ENCODE measurements at regions of chr12 and their contacts with region 1.

Region 1: DNA sequence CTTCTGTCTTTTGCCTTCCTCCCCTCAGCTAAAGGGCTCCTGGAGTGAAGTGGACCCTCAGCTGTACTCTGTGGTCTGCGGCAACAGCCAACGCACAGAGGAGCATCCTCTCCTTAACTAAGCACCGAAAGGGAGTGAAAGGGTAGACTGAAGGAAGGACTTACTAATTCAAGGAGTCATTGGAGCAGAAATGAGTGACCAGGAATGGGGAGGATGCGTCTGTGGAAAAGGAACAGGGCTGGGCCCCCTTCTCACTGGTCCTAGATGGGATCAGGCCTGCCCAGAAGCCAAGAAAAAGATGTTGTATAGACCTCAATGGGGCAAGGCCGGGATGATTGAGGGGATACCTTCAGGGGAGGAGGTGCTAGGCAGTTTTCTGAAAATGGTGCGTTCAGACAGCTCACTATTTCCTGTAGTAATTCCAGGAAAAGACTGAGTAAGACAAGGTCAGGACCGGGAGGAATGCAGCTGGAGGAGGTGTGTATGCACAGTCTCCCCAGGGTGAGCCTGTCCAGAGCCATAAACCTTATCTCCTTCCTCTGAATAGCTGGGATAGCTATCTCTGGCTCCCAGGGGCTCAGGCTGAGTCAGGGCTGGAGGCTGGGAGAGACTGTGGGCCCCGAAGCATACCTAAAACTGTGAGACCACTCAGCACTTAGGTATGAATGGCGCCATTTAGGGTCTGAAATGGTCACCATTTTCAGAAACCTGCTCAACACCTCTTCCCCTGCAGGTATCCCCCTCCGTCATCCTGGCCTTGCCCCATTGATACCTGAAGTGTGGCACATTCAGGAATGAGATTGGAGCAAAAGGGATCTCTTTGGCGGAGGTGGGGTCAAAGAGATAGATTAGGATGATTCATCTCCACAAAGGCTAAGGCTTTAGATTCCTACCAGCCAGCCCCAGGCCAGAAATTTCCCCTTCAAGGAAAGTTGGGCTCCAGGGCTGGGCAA is 20.2 kb upstream of the KRT8 start:
- DNase-seq: peak; percentile 56
- H3K4me3 Mint-ChIP-seq: peak overlapping the region; percentile 36
- H3K27ac Mint-ChIP-seq: peak overlapping the region; percentile 96
- H3K4me1 Mint-ChIP-seq: peaks cover 56% of the 10 kb centered on the region
- H3K27me3 Mint-ChIP-seq: no peaks in the 10 kb centered on the region
- CTCF ChIP-seq: no peak

Region 2: GRCh38 chr12:52884526-52885293 is 40.3 kb before region 1 on chr12:
- CTCF ChIA-PET with region 1: interaction called, 16 read pairs
- intact Hi-C with region 1: no loop called
- DNase-seq: peak; percentile 85
- H3K4me3 Mint-ChIP-seq: peak overlapping the region; percentile 19
- H3K27ac Mint-ChIP-seq: peak overlapping the region; percentile 95
- H3K4me1 Mint-ChIP-seq: no peaks in the 10 kb centered on the region
- H3K27me3 Mint-ChIP-seq: no peaks in the 10 kb centered on the region
- CTCF ChIP-seq: peak; percentile 92

Region 3: DNA sequence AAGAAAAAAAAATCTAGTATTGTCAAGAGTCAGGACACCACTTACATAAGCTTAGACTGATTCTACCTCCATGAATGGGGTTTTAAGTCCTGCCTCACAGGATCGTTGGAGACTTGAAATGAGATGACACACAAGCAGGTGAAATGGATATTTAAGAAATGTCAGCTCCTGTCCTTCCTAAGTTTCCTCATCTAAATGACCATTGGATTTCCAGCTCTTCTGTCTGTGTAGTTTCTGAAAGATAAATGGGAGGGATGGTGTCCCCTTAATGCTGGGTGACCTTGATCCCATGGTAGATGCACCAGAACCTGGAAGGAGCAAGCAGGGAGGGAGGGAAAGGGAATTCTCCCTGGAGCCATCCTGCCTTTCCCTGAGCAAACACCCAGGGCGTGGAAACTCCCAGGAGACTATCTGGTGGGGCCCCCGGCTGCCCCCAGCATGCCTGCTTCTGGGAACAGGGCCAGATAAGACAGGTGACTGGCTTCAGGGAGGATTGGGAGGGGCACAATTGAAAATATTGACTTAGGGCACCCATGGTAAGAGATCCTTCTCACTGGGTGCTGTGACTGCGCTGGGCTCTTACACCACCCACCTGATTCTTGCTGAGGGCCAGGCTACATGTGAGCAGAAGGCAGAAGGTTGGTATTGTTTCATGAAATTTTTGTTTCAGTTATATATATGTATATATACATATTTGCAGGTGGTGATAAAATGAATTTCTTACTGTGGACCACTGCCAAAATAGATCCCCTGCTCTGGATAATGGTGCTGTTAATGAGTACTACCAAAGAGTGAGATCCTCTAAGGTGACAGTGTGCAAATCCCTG is 29.8 kb before region 1 on chr12:
- CTCF ChIA-PET with region 1: interaction called, 16 read pairs
- intact Hi-C with region 1: no loop called
- DNase-seq: peak; percentile 71
- H3K4me3 Mint-ChIP-seq: peak overlapping the region; percentile 58
- H3K27ac Mint-ChIP-seq: peak overlapping the region; percentile 90
- H3K4me1 Mint-ChIP-seq: peaks cover 31% of the 10 kb centered on the region
- H3K27me3 Mint-ChIP-seq: no peaks in the 10 kb centered on the region
- CTCF ChIP-seq: no peak

Region 4: DNA sequence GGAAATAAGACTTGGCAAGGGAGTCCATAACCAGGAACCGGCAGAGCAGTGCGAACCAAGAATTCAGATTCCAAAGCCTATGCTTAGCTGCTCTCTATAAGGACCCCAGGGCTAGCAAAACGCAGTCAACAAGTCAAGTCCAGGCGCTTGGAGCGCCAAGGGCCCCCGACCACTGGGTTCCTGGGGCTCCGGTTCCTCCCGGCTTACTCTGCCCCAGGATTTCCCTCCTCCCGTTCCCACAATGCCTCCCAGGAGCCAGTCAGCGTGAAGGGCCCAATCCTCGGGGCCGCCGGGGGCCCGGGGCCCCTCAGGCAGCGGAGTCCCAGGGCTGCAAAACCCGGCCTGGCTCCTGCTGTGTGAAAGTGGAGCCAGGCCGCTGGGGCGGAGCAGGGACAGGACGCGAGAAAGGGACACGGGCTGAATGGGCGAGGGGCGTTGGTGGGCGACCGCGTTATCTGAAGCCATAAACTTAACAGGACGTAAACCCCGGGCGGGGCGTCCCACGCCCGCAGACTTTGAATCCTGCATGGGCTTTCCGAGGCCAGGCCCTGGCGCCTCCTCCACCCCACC is 21.7 kb before region 1 on chr12:
- CTCF ChIA-PET with region 1: interaction called, 109 read pairs
- intact Hi-C with region 1: loop called (anchors 1 kb)
- DNase-seq: no peak
- H3K4me3 Mint-ChIP-seq: peak overlapping the region; percentile 76
- H3K27ac Mint-ChIP-seq: peak overlapping the region; percentile 97
- H3K4me1 Mint-ChIP-seq: peaks cover 43% of the 10 kb centered on the region
- H3K27me3 Mint-ChIP-seq: no peaks in the 10 kb centered on the region
- CTCF ChIP-seq: no peak

Region 5: DNA sequence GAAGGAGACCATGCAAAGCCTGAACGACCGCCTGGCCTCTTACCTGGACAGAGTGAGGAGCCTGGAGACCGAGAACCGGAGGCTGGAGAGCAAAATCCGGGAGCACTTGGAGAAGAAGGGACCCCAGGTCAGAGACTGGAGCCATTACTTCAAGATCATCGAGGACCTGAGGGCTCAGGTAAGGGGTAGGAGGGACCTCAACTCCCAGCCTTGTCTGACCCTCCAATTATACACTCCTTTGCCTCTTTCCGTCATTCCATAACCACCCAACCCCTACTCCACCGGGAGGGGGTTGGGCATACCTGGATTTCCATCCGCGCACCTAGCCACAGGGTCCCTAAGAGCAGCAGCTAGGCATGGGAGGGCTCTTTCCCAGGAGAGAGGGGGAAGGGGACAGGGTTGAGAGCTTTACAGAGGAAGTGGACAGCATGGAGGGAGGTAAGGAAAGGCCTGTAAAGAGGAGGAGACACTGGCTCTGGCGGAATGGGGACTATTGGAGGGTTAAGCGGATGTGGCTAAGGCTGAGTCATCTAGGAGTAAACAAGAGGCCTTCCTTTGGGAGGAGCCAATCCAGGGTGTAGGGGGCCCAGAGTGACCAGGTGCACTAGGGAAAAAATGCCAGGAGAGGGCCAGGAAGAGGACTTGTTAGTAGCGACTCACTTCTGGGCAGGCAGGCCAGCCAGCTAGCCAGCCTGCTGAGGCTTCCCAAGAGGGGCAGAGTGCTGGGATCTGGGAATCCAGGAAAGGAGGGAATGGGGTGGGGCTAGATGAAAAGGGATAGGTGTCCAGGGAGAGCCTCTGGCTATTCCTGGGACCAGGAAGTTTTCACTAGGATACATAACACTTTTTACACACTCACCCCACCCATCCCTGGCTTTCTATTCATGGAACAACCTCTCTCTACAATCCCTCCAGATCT is 24.6 kb after region 1 on chr12:
- CTCF ChIA-PET with region 1: interaction called, 33 read pairs
- intact Hi-C with region 1: loop called (anchors 1 kb)
- DNase-seq: peak; percentile 83
- H3K4me3 Mint-ChIP-seq: peak overlapping the region; percentile 87
- H3K27ac Mint-ChIP-seq: peak overlapping the region; percentile 97
- H3K4me1 Mint-ChIP-seq: peaks cover 25% of the 10 kb centered on the region
- H3K27me3 Mint-ChIP-seq: no peaks in the 10 kb centered on the region
- CTCF ChIP-seq: no peak

Region 6: GRCh38 chr12:52969828-52970569 is 45.0 kb after region 1 on chr12:
- CTCF ChIA-PET with region 1: interaction called, 7 read pairs
- intact Hi-C with region 1: loop called (anchors 2 kb)
- DNase-seq: peak; percentile 51
- H3K4me3 Mint-ChIP-seq: no peak overlapping the region
- H3K27ac Mint-ChIP-seq: peak overlapping the region; percentile 76
- H3K4me1 Mint-ChIP-seq: peaks cover 44% of the 10 kb centered on the region
- H3K27me3 Mint-ChIP-seq: no peaks in the 10 kb centered on the region
- CTCF ChIP-seq: no peak

Measured in Calu3 (cell line).